Activated naive CD8-positive, alpha-beta T cell treated with anti-CD3 and anti-CD28 coated beads, Interleukin-2, amount 10 ng/mL, durations not matched to agents 7 days and 5 days (primary cell): ENCODE measurements at regions of chr5 and their contacts with region 1.

Region 1: DNA sequence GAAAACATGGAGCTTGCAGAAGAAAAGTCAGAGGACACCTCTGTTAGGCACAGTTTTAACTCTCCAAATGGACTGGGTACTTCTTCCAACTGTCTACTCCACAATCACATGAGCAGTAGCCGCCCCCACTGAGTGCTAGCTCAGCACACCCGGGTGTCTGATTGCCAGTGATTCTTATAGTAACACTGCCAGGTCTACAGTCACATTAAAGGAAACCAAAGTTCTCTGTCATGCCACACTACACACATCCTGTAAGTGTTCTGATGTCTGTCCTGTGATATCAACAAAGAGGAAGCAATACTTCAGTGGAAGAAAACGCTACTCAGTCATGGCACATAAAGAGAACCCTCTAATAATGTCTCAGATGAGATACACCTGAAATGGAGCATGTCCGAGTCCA is at the start of gene HAVCR2:
- DNase-seq: peak; percentile 63
- ATAC-seq: peak; percentile 95
- H3K4me3 Mint-ChIP-seq: peak within 1 kb of the TSS; percentile 92
- H3K27ac Mint-ChIP-seq: peak within 1 kb of the TSS; percentile 96
- H3K4me1 Mint-ChIP-seq: peaks cover 52% of the 10 kb centered on the region
- H3K27me3 Mint-ChIP-seq: no peaks in the 10 kb centered on the region
- total RNA-seq, gene HAVCR2: 73.8 to 76.9 TPM

Region 2: GRCh38 chr5:156716609-156717380 is 392.2 kb before region 1 on chr5:
- POLR2A ChIA-PET with region 1: no interaction called
- DNase-seq: no peak
- ATAC-seq: no peak
- H3K4me3 Mint-ChIP-seq: no peak overlapping the region
- H3K27ac Mint-ChIP-seq: no peak overlapping the region
- H3K4me1 Mint-ChIP-seq: peaks cover 1% of the 10 kb centered on the region
- H3K27me3 Mint-ChIP-seq: no peaks in the 10 kb centered on the region

Region 3: DNA sequence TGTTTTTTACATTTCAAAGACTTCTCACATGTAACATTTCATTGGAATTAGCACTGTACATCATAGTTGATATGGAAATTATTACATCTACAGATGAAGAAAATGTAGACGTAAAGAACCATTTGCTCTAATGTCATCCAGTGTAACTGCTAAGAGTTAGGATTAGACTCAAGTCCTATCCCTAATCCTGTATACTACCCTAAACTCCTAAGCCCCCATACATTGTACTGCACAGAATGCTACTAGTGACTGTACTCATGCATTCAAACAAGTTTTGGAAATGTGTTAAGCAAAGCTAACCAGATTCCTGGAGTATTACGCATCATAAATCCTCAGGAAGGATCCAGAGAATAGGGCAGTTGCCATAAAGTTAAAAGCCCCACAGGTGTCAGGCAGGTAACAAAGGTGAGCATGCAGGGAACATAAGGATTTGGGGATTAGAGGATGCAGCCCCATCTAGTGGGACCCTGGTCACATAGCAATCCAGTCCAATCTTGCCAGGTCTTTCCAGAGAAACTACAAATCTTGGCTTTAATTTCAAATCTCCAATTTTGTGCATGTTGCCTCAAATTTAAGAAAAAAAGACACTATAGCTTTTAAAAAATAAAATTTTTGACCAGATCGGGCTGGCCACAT is 82.1 kb before region 1 on chr5:
- POLR2A ChIA-PET with region 1: interaction called, 24 read pairs
- DNase-seq: no peak
- ATAC-seq: no peak
- H3K4me3 Mint-ChIP-seq: no peak overlapping the region
- H3K27ac Mint-ChIP-seq: peak overlapping the region; percentile 68
- H3K4me1 Mint-ChIP-seq: peaks cover 71% of the 10 kb centered on the region
- H3K27me3 Mint-ChIP-seq: no peaks in the 10 kb centered on the region

Region 4: DNA sequence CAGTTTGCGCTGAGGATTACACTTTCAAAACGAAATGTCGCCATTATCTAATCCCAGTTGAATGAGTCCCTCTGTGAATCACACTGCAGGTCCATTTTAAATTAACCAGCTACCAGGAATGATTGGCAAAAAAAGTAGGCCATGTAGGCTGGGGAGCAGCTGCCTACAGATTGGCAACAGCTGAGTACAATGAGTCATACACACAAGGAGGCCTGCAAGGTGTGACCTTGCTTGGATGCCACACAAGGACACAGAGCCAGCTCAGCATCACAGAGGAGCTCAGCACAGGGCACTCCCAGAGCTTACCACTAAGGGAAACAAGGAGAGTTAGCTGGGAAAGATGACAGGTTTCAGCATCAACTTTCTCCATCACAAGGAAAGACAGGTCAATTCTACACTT is 62.9 kb before region 1 on chr5:
- POLR2A ChIA-PET with region 1: no interaction called
- DNase-seq: no peak
- ATAC-seq: peak; percentile 43
- H3K4me3 Mint-ChIP-seq: no peak overlapping the region
- H3K27ac Mint-ChIP-seq: peak overlapping the region; percentile 59
- H3K4me1 Mint-ChIP-seq: peaks cover 33% of the 10 kb centered on the region
- H3K27me3 Mint-ChIP-seq: no peaks in the 10 kb centered on the region